Ascending aorta (tissue), 2 donors: ENCODE measurements at regions of chr9 and their contacts with region 1.

Region 1: GRCh38 chr9:69131682-69132081 is 42.4 kb upstream of the TJP2 start:
- DNase-seq: peak in 1 of 2 donors; percentile 79
- H3K4me3 ChIP-seq: no peak overlapping the region
- H3K27ac ChIP-seq: peak overlapping the region; percentile 57 to 86
- H3K4me1 ChIP-seq: peaks cover 15 to 39% of the 10 kb centered on the region in 2 donors
- H3K27me3 ChIP-seq: no peaks in the 10 kb centered on the region
- CTCF ChIP-seq: no peak

Region 2: GRCh38 chr9:69078581-69078980 is 53.1 kb before region 1 on chr9:
- intact Hi-C with region 1: loop called (anchors 2 kb)
- DNase-seq: peak in 1 of 2 donors; percentile 89
- H3K4me3 ChIP-seq: no peak overlapping the region
- H3K27ac ChIP-seq: peak overlapping the region; percentile 72 to 73
- H3K4me1 ChIP-seq: peaks cover 12 to 28% of the 10 kb centered on the region in 2 donors
- H3K27me3 ChIP-seq: no peaks in the 10 kb centered on the region
- CTCF ChIP-seq: no peak

Region 3: DNA sequence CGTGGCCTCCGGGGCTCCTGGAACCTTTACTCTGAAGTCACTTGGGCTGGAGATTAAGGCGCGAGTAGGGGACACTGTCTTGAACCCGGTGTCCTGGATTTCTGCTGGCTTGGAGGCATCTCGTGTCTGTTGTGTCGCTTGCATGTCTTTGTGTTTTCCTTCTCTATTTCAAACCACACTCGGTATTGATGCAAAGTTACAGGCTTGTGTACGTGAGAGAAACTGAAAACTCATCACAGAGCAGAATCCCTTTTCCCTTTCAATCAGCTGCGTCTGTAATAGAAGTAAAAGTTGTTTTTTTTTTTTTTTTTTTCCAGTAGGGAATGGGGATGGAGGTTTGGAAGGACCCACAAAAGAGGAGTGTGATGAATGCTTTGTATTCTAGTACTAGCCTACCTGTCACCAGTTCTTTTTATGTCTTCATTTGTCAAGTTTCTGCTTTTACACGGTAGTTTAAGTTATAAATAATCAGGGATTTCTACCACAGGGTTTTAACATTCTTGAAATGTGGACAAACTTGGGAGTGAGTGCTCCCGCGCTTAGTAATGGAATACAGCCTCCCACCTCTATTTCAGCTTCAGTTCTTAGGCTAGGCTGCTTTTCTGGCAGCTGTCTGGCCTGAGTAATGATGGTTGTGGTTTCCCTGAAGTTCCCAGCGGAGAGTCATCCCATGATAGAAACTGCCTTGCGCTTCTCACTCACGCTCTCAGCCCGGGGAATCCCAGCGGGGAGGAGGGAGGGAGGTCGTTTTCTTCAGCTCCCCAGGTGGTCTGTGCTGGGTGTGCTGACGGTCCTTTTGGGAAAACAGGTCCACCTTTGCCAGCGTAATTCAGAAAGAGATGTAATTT is 43.2 kb after region 1 on chr9:
- intact Hi-C with region 1: loop called (anchors 2 kb)
- DNase-seq: peak; percentile 35 to 88
- H3K4me3 ChIP-seq: peak overlapping the region; percentile 68 to 89
- H3K27ac ChIP-seq: peak overlapping the region; percentile 77 to 87
- H3K4me1 ChIP-seq: peaks cover 5 to 18% of the 10 kb centered on the region in 2 donors
- H3K27me3 ChIP-seq: no peaks in the 10 kb centered on the region
- CTCF ChIP-seq: no peak

Region 4: DNA sequence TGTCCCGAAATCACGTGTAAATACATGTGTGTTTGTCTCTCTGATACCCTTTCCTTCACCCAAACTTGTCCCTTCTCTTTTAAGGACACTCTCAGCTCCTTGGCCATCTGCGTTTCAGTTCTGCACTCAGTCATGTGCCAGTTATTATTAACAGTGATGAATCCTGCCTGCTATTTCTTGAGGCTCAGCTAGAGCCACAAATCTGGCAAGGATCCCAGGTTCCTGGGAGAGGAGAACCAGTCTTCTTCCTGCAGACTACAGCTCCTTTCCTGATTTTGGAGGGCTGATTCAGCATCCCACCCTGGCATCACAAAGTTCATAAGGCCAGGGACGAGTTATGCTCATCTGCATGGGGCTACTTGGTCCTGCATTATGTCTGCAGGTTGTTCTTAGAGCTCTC is 917.6 kb after region 1 on chr9:
- intact Hi-C with region 1: no loop called
- DNase-seq: peak; percentile 57 to 92
- H3K4me3 ChIP-seq: no peak overlapping the region
- H3K27ac ChIP-seq: peak overlapping the region; percentile 75 to 80
- H3K4me1 ChIP-seq: peaks cover 19 to 49% of the 10 kb centered on the region in 2 donors
- H3K27me3 ChIP-seq: no peaks in the 10 kb centered on the region
- CTCF ChIP-seq: no peak